ENCODE measurements at regions of chr4 and their contacts with region 1.

Region 1: DNA sequence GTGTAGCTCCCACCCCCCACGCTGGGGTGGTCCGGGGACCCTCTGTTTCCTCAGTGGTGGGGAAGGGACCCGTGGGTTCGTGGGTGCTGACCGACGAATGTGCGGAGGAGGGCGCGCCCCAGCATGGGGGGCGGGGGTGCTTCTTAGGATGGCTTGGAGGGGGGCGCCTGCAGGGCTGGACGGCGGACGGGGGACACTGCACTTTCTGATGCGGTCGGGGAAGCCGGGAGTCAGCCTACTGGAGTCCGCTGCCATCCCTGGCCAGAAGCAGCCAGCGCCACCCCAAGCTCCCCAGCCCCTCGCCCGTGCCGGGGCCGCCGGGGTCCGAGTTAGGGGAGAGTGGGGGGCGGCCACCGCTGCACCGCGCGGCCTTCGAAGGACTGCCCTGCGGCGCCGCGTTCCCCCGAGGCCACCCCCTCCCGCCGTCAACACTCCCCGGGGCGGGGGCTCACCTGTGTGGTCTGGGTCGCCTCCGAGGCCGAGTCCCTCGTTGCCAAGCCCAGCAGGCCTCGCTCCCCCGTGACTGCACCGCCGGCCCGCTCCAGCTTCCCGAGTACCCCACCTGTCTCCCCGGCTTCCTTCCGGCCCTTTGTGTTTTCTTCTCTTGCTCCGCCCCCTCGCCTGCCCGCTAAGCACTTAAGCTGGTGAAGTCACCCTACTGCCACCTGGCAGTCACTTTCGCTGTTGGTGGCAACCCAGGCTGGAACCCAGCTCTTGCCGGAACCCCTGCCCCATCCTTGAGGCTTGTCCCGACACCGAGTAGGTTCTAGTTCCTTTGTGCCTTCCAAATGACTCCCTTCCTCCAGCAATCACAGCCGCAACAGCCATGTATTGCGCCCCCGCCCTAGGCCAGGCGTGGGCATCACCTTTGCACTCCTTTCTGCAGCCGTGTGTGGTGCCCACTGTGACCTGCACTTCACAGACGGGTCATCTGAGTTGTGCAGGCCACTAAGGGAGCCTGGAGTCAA is at the start of gene OCIAD2:
- DNase-seq: peak; percentile 90
- ATAC-seq: peak; percentile 65
- H3K4me3 Mint-ChIP-seq: peak within 1 kb of the TSS; percentile 85
- H3K27ac Mint-ChIP-seq: peak within 1 kb of the TSS; percentile 93
- H3K4me1 Mint-ChIP-seq: peaks cover 48% of the 10 kb centered on the region
- H3K27me3 Mint-ChIP-seq: no peaks in the 10 kb centered on the region
- total RNA-seq, gene OCIAD2: 83.6 to 97.4 TPM

Region 2: GRCh38 chr4:48269861-48270522 is 636.5 kb before region 1 on chr4:
- CTCF ChIA-PET with region 1: no interaction called
- POLR2A ChIA-PET with region 1: no interaction called
- intact Hi-C with region 1: loop called in 1 of 2 experiments (anchors 2 kb)
- DNase-seq: peak; percentile 97
- ATAC-seq: peak; percentile 95
- H3K4me3 Mint-ChIP-seq: peak overlapping the region; percentile 89
- H3K27ac Mint-ChIP-seq: peak overlapping the region; percentile 93
- H3K4me1 Mint-ChIP-seq: peaks cover 17% of the 10 kb centered on the region
- H3K27me3 Mint-ChIP-seq: no peaks in the 10 kb centered on the region

Region 3: GRCh38 chr4:48578132-48578968 is 328.1 kb before region 1 on chr4:
- CTCF ChIA-PET with region 1: interaction called, 4 read pairs
- POLR2A ChIA-PET with region 1: no interaction called
- intact Hi-C with region 1: loop called in 1 of 2 experiments (anchors 2 kb)
- DNase-seq: peak; percentile 63
- ATAC-seq: peak; percentile 78
- H3K4me3 Mint-ChIP-seq: no peak overlapping the region
- H3K27ac Mint-ChIP-seq: no peak overlapping the region
- H3K4me1 Mint-ChIP-seq: peaks cover 4% of the 10 kb centered on the region
- H3K27me3 Mint-ChIP-seq: no peaks in the 10 kb centered on the region

Region 4: GRCh38 chr4:48698029-48698971 is 208.2 kb before region 1 on chr4:
- CTCF ChIA-PET with region 1: no interaction called
- POLR2A ChIA-PET with region 1: no interaction called
- intact Hi-C with region 1: loop called in 1 of 2 experiments (anchors 5 kb)
- DNase-seq: no peak
- ATAC-seq: no peak
- H3K4me3 Mint-ChIP-seq: no peak overlapping the region
- H3K27ac Mint-ChIP-seq: no peak overlapping the region
- H3K4me1 Mint-ChIP-seq: peaks cover 59% of the 10 kb centered on the region
- H3K27me3 Mint-ChIP-seq: no peaks in the 10 kb centered on the region

Region 5: GRCh38 chr4:48830706-48831531 is 75.6 kb before region 1 on chr4 and contains the start of gene OCIAD1:
- CTCF ChIA-PET with region 1: no interaction called
- POLR2A ChIA-PET with region 1: no interaction called
- intact Hi-C with region 1: loop called in 1 of 2 experiments (anchors 1 kb)
- DNase-seq: peak; percentile 96
- ATAC-seq: peak; percentile 99
- H3K4me3 Mint-ChIP-seq: peak within 1 kb of the TSS; percentile 100
- H3K27ac Mint-ChIP-seq: peak within 1 kb of the TSS; percentile 100
- H3K4me1 Mint-ChIP-seq: peaks cover 23% of the 10 kb centered on the region
- H3K27me3 Mint-ChIP-seq: no peaks in the 10 kb centered on the region
- total RNA-seq, gene OCIAD1: 113 to 162 TPM

Region 6: GRCh38 chr4:48944756-48945241 is 38.3 kb after region 1 on chr4:
- CTCF ChIA-PET with region 1: interaction called, 5 read pairs
- POLR2A ChIA-PET with region 1: no interaction called
- intact Hi-C with region 1: loop called in 1 of 2 experiments (anchors 2 kb)
- DNase-seq: peak; percentile 80
- ATAC-seq: peak; percentile 77
- H3K4me3 Mint-ChIP-seq: no peak overlapping the region
- H3K27ac Mint-ChIP-seq: no peak overlapping the region
- H3K4me1 Mint-ChIP-seq: peaks cover 14% of the 10 kb centered on the region
- H3K27me3 Mint-ChIP-seq: no peaks in the 10 kb centered on the region